ENCODE measurements at regions of chr11 and their contacts with region 1.

Region 1: GRCh38 chr11:113994077-113994954 is 19.4 kb downstream of the HTR3A start:
- DNase-seq: peak; percentile 58
- CTCF ChIP-seq: peak; percentile 35

Region 2: DNA sequence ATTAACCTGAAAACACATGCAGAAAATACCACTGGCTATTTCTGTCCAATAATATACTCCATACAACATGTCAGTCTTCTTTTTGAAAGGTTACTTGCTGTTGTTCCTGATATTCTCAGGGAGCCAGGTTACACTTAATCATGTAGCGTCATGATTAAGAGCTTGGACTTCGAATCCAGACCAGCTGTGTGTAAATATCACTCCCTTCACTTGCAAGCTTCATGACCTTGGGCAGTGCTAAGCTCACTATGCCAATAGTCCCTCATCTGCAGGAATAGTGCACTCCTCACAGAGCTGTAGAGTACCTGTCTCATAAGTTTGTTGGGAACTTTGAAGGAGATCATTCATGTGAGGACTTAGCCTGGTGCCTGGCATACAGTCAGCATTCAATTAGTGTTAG is 87.8 kb before region 1 on chr11:
- in situ Hi-C with region 1: no loop called
- DNase-seq: no peak
- CTCF ChIP-seq: no peak

Region 3: DNA sequence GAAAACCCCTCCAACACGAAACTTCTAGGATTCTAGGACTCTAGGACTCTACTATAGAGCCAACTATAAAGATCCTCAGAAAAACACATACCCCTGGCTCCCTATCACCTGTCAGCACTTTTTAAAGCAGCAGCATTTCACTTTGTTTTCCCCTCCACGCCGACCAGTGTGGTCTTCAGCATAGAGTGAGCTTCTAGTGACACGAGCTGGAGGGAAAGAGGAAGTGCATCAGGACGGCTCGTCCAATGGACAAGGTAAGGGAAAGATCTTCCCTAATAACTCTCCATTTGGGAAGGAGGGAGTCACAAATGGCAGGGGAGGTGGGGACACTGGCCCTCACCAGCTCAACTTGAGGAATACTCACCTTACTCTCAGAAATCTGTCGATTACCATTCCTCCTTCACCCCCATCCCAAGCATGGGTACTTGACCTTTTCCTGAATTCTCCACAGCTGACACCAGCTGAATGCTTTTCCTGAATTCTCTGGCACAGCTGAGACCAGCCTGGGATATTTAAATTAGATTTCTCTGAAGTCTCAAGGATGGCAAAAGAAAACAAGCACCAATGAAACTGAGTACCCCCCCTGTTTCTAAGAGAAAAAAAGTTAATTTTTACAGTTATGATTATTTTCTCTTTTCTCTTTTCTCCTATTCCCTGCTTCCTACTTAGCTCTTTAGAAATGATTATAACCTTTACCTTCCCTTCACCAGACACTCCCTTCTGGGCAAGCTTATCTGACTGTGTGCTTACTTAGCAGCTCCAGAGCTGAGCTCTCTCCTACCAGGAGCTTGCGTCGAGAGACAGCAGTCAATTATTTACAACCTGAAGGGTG is 268.6 kb after region 1 on chr11:
- in situ Hi-C with region 1: loop called (anchors 10 kb)
- DNase-seq: no peak
- CTCF ChIP-seq: no peak

Measured in GM13976 (cell line).